GM12878 (cell line): ENCODE measurements at regions of chr2 and their contacts with region 1.

Region 1: DNA sequence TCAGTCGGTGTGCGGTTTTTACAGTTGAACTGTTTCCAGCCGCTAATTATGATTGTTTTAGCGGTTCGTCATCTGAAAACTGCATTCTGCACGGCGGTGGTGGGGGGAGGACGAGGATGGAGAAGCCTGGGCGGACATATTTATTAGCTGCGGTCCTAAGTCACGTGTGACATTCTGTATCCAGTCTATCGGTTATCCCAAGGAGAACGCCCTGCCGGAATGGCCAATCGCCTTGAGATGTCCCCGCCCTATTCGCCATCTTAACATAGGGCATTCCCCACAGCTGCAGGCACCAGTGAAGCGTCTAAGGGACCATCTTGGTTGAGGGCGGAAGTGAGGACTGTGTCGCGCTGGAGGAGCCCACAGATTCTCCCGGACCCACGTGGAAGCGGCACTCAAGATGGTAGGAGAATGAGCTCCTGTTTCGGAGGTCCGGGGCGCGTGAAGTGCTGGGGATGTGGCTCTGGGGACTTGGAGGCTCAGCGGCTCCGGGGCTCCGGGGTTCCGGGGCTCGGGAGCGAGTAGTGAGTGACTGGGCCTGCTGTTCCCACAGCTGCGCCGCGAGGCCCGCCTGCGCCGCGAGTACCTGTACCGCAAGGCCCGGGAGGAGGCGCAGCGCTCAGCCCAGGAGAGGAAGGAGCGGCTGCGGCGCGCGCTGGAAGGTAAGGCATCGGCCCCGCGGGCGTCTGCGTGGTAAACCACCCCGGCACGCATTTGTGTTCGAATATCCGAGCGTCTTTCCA is at the start of gene IMP4:
- DNase-seq: peak; percentile 99
- ATAC-seq: peak; percentile 92
- H3K4me3 ChIP-seq: peak within 1 kb of the TSS; percentile 67
- H3K27ac ChIP-seq: peak within 1 kb of the TSS; percentile 81
- H3K4me1 ChIP-seq: peaks cover 21% of the 10 kb centered on the region
- H3K27me3 ChIP-seq: no peaks in the 10 kb centered on the region
- CTCF ChIP-seq: peak; percentile 27 to 45 (median 29); a peak in 4 of 6 replicates
- EP300 ChIP-seq: no peak
- POLR2A ChIP-seq: peak; percentile 85
- RAD21 ChIP-seq: no peak
- polyA plus RNA-seq, gene IMP4: 41.4 to 100 TPM

Region 2: GRCh38 chr2:130355578-130356431 is 13.1 kb after region 1 on chr2 and contains the start of gene PTPN18:
- CTCF ChIA-PET with region 1: interaction called, 12 read pairs
- POLR2A ChIA-PET with region 1: interaction called, 25 read pairs
- RAD21 ChIA-PET with region 1: interaction called, 14 read pairs
- SMC1A ChIA-PET with region 1: interaction called, 14 read pairs
- in situ Hi-C with region 1: no loop called
- intact Hi-C with region 1: no loop called
- DNase-seq: no peak
- ATAC-seq: peak; percentile 97
- H3K4me3 ChIP-seq: peak within 1 kb of the TSS; percentile 82
- H3K27ac ChIP-seq: no peak within 1 kb of the TSS
- H3K4me1 ChIP-seq: peaks cover 18% of the 10 kb centered on the region
- H3K27me3 ChIP-seq: no peaks in the 10 kb centered on the region
- CTCF ChIP-seq: peak; percentile 30 to 46 (median 34); a peak in 4 of 6 replicates
- EP300 ChIP-seq: no peak
- POLR2A ChIP-seq: peak; percentile 68
- RAD21 ChIP-seq: peak; percentile 49
- polyA plus RNA-seq, gene PTPN18: 14.8 to 17.5 TPM

Region 3: DNA sequence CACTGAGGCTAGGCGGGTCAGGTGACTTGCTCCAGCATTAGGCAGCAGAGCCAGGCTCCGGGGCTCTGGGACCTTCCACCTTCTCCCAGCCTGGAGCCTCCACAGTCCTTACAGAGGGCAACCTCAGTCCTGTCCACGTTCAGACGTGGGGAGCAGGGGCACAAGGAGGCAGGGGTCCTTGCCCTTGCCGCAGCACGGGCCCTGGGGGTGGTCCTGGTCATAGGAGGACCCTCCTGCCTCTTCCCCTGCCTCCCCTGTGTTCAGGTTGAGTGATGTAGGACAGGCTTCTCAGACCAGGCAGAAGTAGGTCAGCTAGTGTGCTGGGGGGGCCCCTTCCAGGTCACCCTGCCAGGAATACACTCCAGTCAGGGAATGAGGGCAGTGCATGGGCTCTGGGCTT is 488.7 kb after region 1 on chr2:
- CTCF ChIA-PET with region 1: no interaction called
- POLR2A ChIA-PET with region 1: no interaction called
- RAD21 ChIA-PET with region 1: no interaction called
- SMC1A ChIA-PET with region 1: no interaction called
- in situ Hi-C with region 1: no loop called
- intact Hi-C with region 1: no loop called
- DNase-seq: no peak
- ATAC-seq: no peak
- H3K4me3 ChIP-seq: no peak overlapping the region
- H3K27ac ChIP-seq: no peak overlapping the region
- H3K4me1 ChIP-seq: no peaks in the 10 kb centered on the region
- H3K27me3 ChIP-seq: peaks cover 0 to 1% of the 10 kb centered on the region in 2 experiments; a peak in 2 of 4 replicates
- CTCF ChIP-seq: no peak
- EP300 ChIP-seq: no peak
- POLR2A ChIP-seq: no peak
- RAD21 ChIP-seq: no peak

Region 4: DNA sequence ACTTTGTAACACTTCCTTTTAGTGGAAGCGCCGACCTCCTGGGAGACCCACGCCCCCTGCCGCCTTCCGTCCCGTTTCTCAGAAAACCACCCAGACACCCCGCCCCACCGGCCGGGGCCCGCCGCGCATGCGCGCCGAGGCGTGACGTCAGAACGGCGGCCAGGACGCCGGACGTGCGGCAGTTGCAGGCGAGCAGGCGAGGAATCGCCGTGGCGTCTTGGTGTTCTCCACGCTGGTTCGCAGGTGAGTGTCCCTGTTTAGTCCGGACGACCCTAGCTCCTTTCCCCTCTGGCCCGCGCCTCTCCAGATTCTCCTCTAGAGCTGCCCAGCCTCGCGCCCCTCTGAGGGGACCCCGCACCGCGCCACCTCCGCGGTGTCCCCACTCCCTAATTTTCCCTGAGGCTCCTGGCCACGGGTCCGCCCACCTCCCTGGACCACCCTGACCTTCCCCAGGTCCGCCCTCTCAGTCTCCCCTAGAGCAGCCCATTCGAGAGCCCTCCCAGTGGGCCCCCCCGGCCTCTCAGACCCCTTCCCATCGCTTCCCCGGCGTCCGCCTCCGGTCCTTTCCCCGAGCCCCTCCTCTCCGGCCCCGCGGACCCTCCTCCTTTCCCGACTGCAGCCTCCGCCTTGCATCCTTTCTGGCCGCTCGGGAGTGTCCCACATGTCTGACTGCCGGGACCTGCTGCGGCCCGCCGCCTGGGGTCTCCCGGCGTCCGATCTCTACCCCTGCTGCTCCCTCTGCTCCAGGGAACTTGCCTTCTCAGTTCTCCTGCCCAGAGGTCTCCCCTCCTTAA is 762.6 kb after region 1 on chr2 and contains the start of gene PLEKHB2:
- CTCF ChIA-PET with region 1: no interaction called
- POLR2A ChIA-PET with region 1: no interaction called
- RAD21 ChIA-PET with region 1: no interaction called
- SMC1A ChIA-PET with region 1: no interaction called
- in situ Hi-C with region 1: no loop called
- intact Hi-C with region 1: loop called (anchors 10 kb)
- DNase-seq: peak; percentile 66
- ATAC-seq: peak; percentile 87
- H3K4me3 ChIP-seq: peak within 1 kb of the TSS; percentile 100
- H3K27ac ChIP-seq: peak within 1 kb of the TSS; percentile 77
- H3K4me1 ChIP-seq: peaks cover 6% of the 10 kb centered on the region
- H3K27me3 ChIP-seq: no peaks in the 10 kb centered on the region
- CTCF ChIP-seq: peak in 2 of 3 experiments; percentile 11 to 20; a peak in 2 of 6 replicates
- EP300 ChIP-seq: no peak; a peak in 1 of 4 replicates
- POLR2A ChIP-seq: peak; percentile 96
- RAD21 ChIP-seq: no peak
- polyA plus RNA-seq, gene PLEKHB2: 12.3 to 16.4 TPM

Region 5: GRCh38 chr2:131801210-131801744 is 1458.6 kb after region 1 on chr2:
- CTCF ChIA-PET with region 1: no interaction called
- POLR2A ChIA-PET with region 1: no interaction called
- RAD21 ChIA-PET with region 1: no interaction called
- SMC1A ChIA-PET with region 1: no interaction called
- in situ Hi-C with region 1: loop called (anchors 25 kb)
- intact Hi-C with region 1: no loop called
- DNase-seq: no peak
- ATAC-seq: no peak
- H3K4me3 ChIP-seq: no peak overlapping the region
- H3K27ac ChIP-seq: no peak overlapping the region
- H3K4me1 ChIP-seq: no peaks in the 10 kb centered on the region
- H3K27me3 ChIP-seq: no peaks in the 10 kb centered on the region; a peak in 1 of 4 replicates
- CTCF ChIP-seq: no peak
- EP300 ChIP-seq: no peak
- POLR2A ChIP-seq: no peak
- RAD21 ChIP-seq: no peak